Activated CD8-positive, alpha-beta T cell treated with anti-CD3 and anti-CD28 coated beads for 36 hours (primary cell): ENCODE measurements at regions of chr1 and their contacts with region 1.

Region 1: GRCh38 chr1:109493805-109494539 is at the start of gene CYB561D1:
- DNase-seq: peak; percentile 89
- ATAC-seq: peak; percentile 91
- H3K4me3 Mint-ChIP-seq: peak within 1 kb of the TSS; percentile 93
- H3K27ac Mint-ChIP-seq: peak within 1 kb of the TSS; percentile 73
- H3K4me1 Mint-ChIP-seq: peaks cover 45% of the 10 kb centered on the region
- H3K27me3 Mint-ChIP-seq: no peaks in the 10 kb centered on the region
- CTCF ChIP-seq: peak; percentile 88
- total RNA-seq, gene CYB561D1: 7.0 to 9.5 TPM

Region 2: DNA sequence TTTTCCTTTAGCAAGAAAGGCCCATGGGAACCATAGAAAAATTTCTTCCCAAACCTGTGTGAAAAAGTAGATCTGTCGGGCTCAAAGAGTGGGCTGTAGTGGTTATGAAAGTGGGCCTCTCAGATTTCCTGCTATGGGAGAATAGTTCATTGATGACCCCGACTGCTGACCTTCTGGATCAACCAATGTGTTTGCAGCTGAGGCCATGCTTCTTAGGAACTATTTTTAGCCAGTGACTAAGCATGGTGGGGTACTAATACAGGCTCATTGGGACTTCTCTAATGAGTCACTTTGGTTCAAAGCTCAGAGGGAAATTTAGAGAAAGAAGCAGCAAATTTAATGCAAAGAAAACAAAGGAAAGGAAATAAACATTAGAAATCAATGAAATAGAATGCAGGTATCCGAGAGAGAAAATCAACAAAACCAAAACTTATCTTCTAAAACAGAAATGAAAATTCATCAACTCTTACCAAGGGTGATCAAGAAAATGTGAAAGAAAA is 55.1 kb before region 1 on chr1:
- CTCF ChIA-PET with region 1: no interaction called
- POLR2A ChIA-PET with region 1: no interaction called
- intact Hi-C with region 1: no loop called
- DNase-seq: peak; percentile 35
- ATAC-seq: peak; percentile 85
- H3K4me3 Mint-ChIP-seq: no peak overlapping the region
- H3K27ac Mint-ChIP-seq: no peak overlapping the region
- H3K4me1 Mint-ChIP-seq: no peaks in the 10 kb centered on the region
- H3K27me3 Mint-ChIP-seq: peaks cover 5% of the 10 kb centered on the region
- CTCF ChIP-seq: no peak

Region 3: DNA sequence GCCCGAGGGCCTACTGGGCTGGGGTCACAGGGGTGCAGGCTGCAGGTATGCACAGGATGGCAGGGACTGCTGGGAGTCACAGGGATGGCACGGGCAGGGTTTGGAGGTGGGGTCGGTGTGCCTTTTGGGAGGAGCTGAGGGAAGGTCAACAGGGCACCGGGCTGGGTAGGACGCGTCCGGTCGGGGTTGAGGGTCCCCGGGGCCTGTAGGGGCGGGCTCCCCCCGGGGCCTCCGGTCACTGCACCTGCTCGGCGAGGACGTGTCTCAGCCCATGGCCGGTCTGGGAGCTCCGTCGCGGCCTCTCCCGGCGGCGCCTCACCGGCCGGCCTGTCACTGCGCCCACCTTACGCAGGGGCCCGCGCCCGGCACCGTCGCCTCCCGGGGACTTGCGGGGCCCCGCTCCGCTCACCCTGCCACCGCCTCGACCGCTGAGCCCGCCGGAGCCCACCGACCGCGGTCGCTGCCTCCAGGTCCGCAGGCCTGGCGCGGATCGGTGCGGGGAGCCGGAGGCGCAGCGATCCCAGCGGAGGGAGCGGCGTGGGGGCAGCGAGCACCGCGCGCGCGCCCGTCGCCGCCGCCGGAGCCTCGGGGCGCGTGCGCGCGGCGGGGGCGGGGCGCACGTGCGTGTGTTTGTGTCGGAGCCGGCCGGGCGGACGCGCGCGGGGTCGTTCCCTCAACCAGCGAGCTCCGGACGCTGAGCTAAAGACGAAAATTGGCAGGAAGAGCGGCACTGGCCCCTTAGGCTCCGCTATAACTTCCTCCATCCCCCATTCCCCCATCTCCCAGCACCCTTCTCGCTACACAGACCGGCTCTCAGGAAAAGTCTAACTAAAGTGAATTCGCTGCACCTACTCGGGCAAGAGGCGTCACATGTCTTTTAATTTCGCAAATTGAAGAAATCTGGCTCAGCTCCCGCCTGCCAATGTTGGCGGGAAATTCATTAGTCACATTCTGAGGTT is 15.5 kb after region 1 on chr1 and contains the start of gene AMIGO1:
- CTCF ChIA-PET with region 1: interaction called, 152 read pairs
- POLR2A ChIA-PET with region 1: interaction called, 48 read pairs
- intact Hi-C with region 1: no loop called
- DNase-seq: peak; percentile 71
- ATAC-seq: peak; percentile 71
- H3K4me3 Mint-ChIP-seq: peak within 1 kb of the TSS; percentile 78
- H3K27ac Mint-ChIP-seq: peak within 1 kb of the TSS; percentile 84
- H3K4me1 Mint-ChIP-seq: peaks cover 53% of the 10 kb centered on the region
- H3K27me3 Mint-ChIP-seq: no peaks in the 10 kb centered on the region
- CTCF ChIP-seq: no peak
- total RNA-seq, gene AMIGO1: 1.3 to 1.7 TPM

Region 4: GRCh38 chr1:109516872-109517271 is 22.9 kb after region 1 on chr1:
- CTCF ChIA-PET with region 1: interaction called, 1,390 read pairs
- POLR2A ChIA-PET with region 1: interaction called, 6 read pairs
- intact Hi-C with region 1: no loop called
- DNase-seq: no peak
- ATAC-seq: no peak
- H3K4me3 Mint-ChIP-seq: no peak overlapping the region
- H3K27ac Mint-ChIP-seq: no peak overlapping the region
- H3K4me1 Mint-ChIP-seq: peaks cover 2% of the 10 kb centered on the region
- H3K27me3 Mint-ChIP-seq: no peaks in the 10 kb centered on the region
- CTCF ChIP-seq: no peak

Region 5: GRCh38 chr1:109630081-109630897 is 136.3 kb after region 1 on chr1:
- CTCF ChIA-PET with region 1: no interaction called
- POLR2A ChIA-PET with region 1: no interaction called
- intact Hi-C with region 1: no loop called
- DNase-seq: peak; percentile 57
- ATAC-seq: no peak
- H3K4me3 Mint-ChIP-seq: no peak overlapping the region
- H3K27ac Mint-ChIP-seq: no peak overlapping the region
- H3K4me1 Mint-ChIP-seq: peaks cover 10% of the 10 kb centered on the region
- H3K27me3 Mint-ChIP-seq: no peaks in the 10 kb centered on the region
- CTCF ChIP-seq: peak; percentile 53